ENCODE measurements at regions of chr18 and their contacts with region 1.

Region 1: GRCh38 chr18:55090566-55091188 is 131.4 kb upstream of the CCDC68 start:
- DNase-seq: no peak
- ATAC-seq: no peak
- H3K4me3 ChIP-seq: no peak overlapping the region
- H3K27ac ChIP-seq: no peak overlapping the region
- H3K4me1 ChIP-seq: no peaks in the 10 kb centered on the region
- H3K27me3 ChIP-seq: no peaks in the 10 kb centered on the region
- CTCF ChIP-seq: no peak

Region 2: GRCh38 chr18:55038162-55038561 is 52.5 kb before region 1 on chr18:
- intact Hi-C with region 1: no loop called
- DNase-seq: no peak
- ATAC-seq: no peak
- H3K4me3 ChIP-seq: no peak overlapping the region
- H3K27ac ChIP-seq: no peak overlapping the region
- H3K4me1 ChIP-seq: no peaks in the 10 kb centered on the region
- H3K27me3 ChIP-seq: no peaks in the 10 kb centered on the region
- CTCF ChIP-seq: no peak

Region 3: DNA sequence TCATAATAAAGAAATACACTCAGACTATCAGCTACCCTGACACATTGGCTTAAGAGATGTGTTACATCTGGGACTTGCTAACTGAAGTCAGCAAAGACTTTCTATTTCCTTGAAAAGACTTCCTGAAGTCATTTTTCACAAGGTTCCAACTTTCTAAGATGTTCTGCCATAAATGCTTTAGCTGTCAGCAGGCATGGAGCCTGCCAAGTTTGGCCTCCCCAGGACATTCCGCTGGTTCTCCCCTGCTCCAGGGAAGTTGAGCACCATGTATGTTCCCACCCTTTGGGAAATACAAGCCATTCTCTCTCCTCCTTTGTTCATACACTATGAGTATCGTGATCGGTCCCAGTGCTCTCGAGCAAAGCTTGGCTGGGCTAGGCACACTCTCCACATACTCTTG is 71.2 kb after region 1 on chr18:
- intact Hi-C with region 1: no loop called
- DNase-seq: peak in 1 of 2 donors; percentile 7
- ATAC-seq: no peak
- H3K4me3 ChIP-seq: no peak overlapping the region
- H3K27ac ChIP-seq: no peak overlapping the region
- H3K4me1 ChIP-seq: no peaks in the 10 kb centered on the region
- H3K27me3 ChIP-seq: no peaks in the 10 kb centered on the region
- CTCF ChIP-seq: no peak

Region 4: DNA sequence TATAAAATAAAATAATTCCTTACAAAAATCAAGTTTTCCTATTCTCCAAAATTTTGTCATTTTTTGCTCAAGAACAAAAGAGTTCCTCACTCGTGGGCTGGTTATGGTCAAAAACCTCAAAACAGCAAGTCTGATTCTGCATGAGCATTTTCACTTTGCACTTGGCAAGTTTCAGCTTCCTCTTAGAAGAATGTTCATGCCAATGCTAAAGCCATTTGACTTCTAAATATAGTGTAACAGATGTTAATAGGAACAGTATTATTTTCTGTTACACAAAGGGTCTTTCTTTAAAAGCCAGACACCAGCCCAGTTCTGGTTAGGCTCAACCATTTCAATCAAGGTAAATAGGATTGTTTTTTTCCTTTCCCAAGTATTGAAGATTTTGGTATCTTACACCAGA is 129.8 kb after region 1 on chr18:
- intact Hi-C with region 1: loop called in 1 of 2 experiments (anchors 1 kb)
- DNase-seq: no peak
- ATAC-seq: no peak
- H3K4me3 ChIP-seq: no peak overlapping the region
- H3K27ac ChIP-seq: no peak overlapping the region
- H3K4me1 ChIP-seq: no peaks in the 10 kb centered on the region
- H3K27me3 ChIP-seq: no peaks in the 10 kb centered on the region
- CTCF ChIP-seq: no peak

Measured in psoas muscle (tissue), 8 donors.